Endothelial cell of umbilical vein (primary cell): ENCODE measurements at regions of chr12 and their contacts with region 1.

Region 1: GRCh38 chr12:93766796-93767523 is 89.8 kb downstream of the CRADD start:
- DNase-seq: peak; percentile 68
- H3K4me3 ChIP-seq: no peak overlapping the region
- H3K27ac ChIP-seq: no peak overlapping the region
- H3K4me1 ChIP-seq: peaks cover 7% of the 10 kb centered on the region
- H3K27me3 ChIP-seq: no peaks in the 10 kb centered on the region
- CTCF ChIP-seq: peak; percentile 46 to 53
- POLR2A ChIP-seq: no peak

Region 2: GRCh38 chr12:93729934-93730333 is 37.0 kb before region 1 on chr12:
- CTCF ChIA-PET with region 1: no interaction called
- POLR2A ChIA-PET with region 1: no interaction called
- dilution Hi-C with region 1: no loop called
- intact Hi-C with region 1: no loop called
- DNase-seq: no peak
- H3K4me3 ChIP-seq: no peak overlapping the region
- H3K27ac ChIP-seq: no peak overlapping the region
- H3K4me1 ChIP-seq: no peaks in the 10 kb centered on the region
- H3K27me3 ChIP-seq: no peaks in the 10 kb centered on the region
- CTCF ChIP-seq: no peak
- POLR2A ChIP-seq: no peak

Region 3: DNA sequence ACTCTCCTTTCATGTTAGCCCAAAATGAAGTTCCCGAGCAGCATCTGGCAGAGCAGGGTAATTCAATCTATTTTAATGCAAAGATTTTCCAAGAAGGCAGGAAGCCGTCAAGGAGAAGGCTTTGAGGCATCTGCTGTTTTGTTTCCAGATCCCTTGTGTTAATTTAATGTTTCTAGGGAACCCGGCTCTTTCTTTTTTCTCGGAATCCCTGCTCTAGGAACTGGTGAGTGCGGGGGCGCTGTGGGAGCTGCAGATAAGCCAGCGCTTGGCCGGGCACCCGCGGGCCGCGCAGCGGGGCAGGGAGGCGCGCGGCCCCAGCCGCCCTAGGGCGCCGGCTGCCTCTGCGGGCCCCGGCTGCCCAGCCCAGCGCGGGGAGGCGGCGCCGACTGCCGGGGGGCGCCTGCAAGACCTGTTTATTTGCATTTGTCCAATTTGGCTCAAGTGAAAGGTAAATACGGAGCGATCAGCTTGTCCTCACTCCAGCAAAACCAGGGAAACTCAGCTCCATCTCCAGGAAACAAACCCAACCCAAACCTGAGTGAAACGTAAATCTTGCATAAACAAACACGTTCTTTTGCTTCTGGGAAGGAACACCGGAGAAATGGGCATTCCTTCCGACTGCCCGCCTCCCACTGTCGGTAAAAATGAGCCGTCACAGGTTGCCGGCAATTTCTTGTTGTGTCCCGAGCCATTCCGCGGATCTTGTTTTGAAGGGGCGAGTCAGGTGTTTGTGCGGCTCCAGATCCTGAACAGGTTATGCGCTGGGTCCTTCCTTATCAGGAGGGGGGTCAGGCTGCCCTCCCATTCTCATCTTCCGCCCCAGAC is 24.6 kb before region 1 on chr12:
- CTCF ChIA-PET with region 1: interaction called, 19 read pairs
- POLR2A ChIA-PET with region 1: no interaction called
- dilution Hi-C with region 1: no loop called
- intact Hi-C with region 1: no loop called
- DNase-seq: peak; percentile 80
- H3K4me3 ChIP-seq: peak overlapping the region; percentile 34 to 82 (median 69)
- H3K27ac ChIP-seq: no peak overlapping the region
- H3K4me1 ChIP-seq: peaks cover 8% of the 10 kb centered on the region
- H3K27me3 ChIP-seq: no peaks in the 10 kb centered on the region
- CTCF ChIP-seq: peak; percentile 24 to 38
- POLR2A ChIP-seq: no peak

Region 4: DNA sequence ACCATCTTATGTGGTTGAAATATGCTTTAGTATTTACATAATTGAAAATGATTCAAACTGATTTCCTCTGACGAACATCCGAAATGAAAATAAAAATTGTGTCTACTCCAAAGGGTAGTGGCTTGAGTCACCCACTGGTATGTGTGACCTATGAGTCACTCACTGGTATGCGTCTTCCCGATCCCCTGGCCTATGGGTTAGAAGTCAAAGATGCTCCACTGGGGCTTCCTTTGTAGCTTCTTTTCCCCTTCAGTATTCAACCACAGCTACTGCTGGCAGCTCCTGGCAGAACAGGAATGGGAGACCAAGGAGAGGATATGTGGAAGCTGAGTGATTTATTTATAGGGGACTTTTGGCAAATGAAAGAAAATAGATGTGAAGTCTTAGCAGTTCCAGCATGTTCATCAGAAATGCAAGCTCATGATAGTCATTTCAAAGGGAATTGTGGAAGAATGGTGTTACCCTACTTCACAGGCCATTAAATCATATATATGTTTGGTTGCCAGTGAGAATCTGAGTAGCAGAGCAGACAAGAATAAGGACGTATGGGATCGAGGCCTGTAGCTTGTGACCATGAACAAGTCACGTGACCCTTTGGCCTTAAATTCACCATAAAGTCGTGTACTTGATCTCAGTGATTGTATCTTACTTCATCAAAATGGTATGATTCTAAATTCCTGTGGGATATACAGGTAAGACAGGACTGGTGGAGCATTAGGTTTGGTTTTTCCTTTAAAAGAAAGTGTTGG is 18.5 kb after region 1 on chr12:
- CTCF ChIA-PET with region 1: interaction called, 25 read pairs
- POLR2A ChIA-PET with region 1: no interaction called
- dilution Hi-C with region 1: no loop called
- intact Hi-C with region 1: no loop called
- DNase-seq: peak; percentile 90
- H3K4me3 ChIP-seq: no peak overlapping the region
- H3K27ac ChIP-seq: peak overlapping the region; percentile 99
- H3K4me1 ChIP-seq: peaks cover 44% of the 10 kb centered on the region
- H3K27me3 ChIP-seq: no peaks in the 10 kb centered on the region
- CTCF ChIP-seq: no peak
- POLR2A ChIP-seq: peak; percentile 36

Region 5: DNA sequence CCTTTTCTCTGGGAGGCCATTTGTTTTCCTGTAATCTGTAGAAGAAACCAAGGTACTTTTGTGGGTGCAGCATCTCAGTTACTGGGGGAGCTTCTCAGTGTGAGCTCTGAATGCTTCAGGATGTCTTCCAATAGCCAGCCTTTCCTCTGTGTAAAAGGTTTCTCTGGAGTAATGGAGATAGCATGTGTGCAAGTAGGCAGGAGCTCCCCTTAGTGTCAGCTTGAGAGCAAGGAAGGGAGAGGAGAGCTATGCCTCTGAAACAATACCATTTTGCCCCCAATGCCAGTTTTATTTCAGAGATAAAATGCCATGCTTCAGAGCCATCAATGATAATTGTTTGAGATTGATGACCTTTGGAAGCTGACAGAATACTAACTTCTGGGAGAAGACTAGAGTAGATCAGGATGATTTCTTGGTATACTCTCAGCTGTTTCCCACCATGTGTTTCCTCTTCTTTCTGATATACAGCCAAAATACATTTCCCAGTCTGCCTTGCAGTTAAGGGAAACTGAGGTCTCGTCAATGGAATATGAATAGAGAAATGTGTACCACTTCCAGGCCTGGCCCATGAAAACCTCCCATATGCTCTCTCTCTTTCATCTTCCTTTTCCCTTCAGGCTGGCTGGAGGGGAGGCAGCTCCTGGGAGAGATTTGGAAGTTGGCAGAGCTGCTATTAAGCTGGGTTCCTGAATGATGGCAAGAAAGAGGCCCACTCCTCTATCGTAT is 35.9 kb after region 1 on chr12:
- CTCF ChIA-PET with region 1: interaction called, 37 read pairs
- POLR2A ChIA-PET with region 1: no interaction called
- dilution Hi-C with region 1: no loop called
- intact Hi-C with region 1: no loop called
- DNase-seq: no peak
- H3K4me3 ChIP-seq: no peak overlapping the region
- H3K27ac ChIP-seq: no peak overlapping the region
- H3K4me1 ChIP-seq: peaks cover 16% of the 10 kb centered on the region
- H3K27me3 ChIP-seq: no peaks in the 10 kb centered on the region
- CTCF ChIP-seq: no peak
- POLR2A ChIP-seq: no peak

Region 6: GRCh38 chr12:93972411-93973208 is 205.7 kb after region 1 on chr12:
- CTCF ChIA-PET with region 1: interaction called, 57 read pairs
- POLR2A ChIA-PET with region 1: no interaction called
- dilution Hi-C with region 1: no loop called
- intact Hi-C with region 1: no loop called
- DNase-seq: no peak
- H3K4me3 ChIP-seq: no peak overlapping the region
- H3K27ac ChIP-seq: no peak overlapping the region
- H3K4me1 ChIP-seq: no peaks in the 10 kb centered on the region
- H3K27me3 ChIP-seq: peaks cover 1 to 2% of the 10 kb centered on the region in 2 experiments
- CTCF ChIP-seq: no peak
- POLR2A ChIP-seq: no peak

Region 7: GRCh38 chr12:94074980-94075928 is 308.3 kb after region 1 on chr12:
- CTCF ChIA-PET with region 1: interaction called, 58 read pairs
- POLR2A ChIA-PET with region 1: no interaction called
- dilution Hi-C with region 1: no loop called
- intact Hi-C with region 1: loop called (anchors 1 kb)
- DNase-seq: peak; percentile 28
- H3K4me3 ChIP-seq: no peak overlapping the region
- H3K27ac ChIP-seq: no peak overlapping the region
- H3K4me1 ChIP-seq: no peaks in the 10 kb centered on the region
- H3K27me3 ChIP-seq: peaks cover 8 to 9% of the 10 kb centered on the region in 2 experiments
- CTCF ChIP-seq: peak; percentile 43 to 46
- POLR2A ChIP-seq: no peak